ENCODE measurements at regions of chr3 and their contacts with region 1.

Region 1: GRCh38 chr3:56238299-56238698 is 230.0 kb downstream of the ERC2 start:
- DNase-seq: no peak
- ATAC-seq: no peak
- H3K4me3 Mint-ChIP-seq: no peak overlapping the region
- H3K27ac Mint-ChIP-seq: no peak overlapping the region
- H3K4me1 Mint-ChIP-seq: no peaks in the 10 kb centered on the region
- H3K27me3 Mint-ChIP-seq: peaks cover 9% of the 10 kb centered on the region

Region 2: GRCh38 chr3:56251343-56251945 is 13.1 kb after region 1 on chr3:
- CTCF ChIA-PET with region 1: interaction called, 12 read pairs
- POLR2A ChIA-PET with region 1: no interaction called
- DNase-seq: peak; percentile 44
- ATAC-seq: no peak
- H3K4me3 Mint-ChIP-seq: no peak overlapping the region
- H3K27ac Mint-ChIP-seq: no peak overlapping the region
- H3K4me1 Mint-ChIP-seq: no peaks in the 10 kb centered on the region
- H3K27me3 Mint-ChIP-seq: peaks cover 13% of the 10 kb centered on the region

Region 3: GRCh38 chr3:56595975-56596840 is 357.9 kb after region 1 on chr3:
- CTCF ChIA-PET with region 1: no interaction called
- POLR2A ChIA-PET with region 1: no interaction called
- DNase-seq: no peak
- ATAC-seq: no peak
- H3K4me3 Mint-ChIP-seq: no peak overlapping the region
- H3K27ac Mint-ChIP-seq: no peak overlapping the region
- H3K4me1 Mint-ChIP-seq: peaks cover 32% of the 10 kb centered on the region
- H3K27me3 Mint-ChIP-seq: no peaks in the 10 kb centered on the region

Measured in activated CD8-positive, alpha-beta T cell treated with anti-CD3 and anti-CD28 coated beads, Interleukin-2, amount 10 ng/mL, durations not matched to agents 7 days and 5 days (primary cell).